ENCODE measurements at regions of chr5 and their contacts with region 1.

Region 1: GRCh38 chr5:181207214-181208107 is 2.5 kb upstream of the TRIM7 start:
- DNase-seq: peak; percentile 86
- ATAC-seq: peak; percentile 48
- H3K4me3 ChIP-seq: peak overlapping the region; percentile 30 to 50
- H3K27ac ChIP-seq: peak overlapping the region; percentile 93
- H3K4me1 ChIP-seq: peaks cover 27 to 60% of the 10 kb centered on the region in 2 experiments
- H3K27me3 ChIP-seq: no peaks in the 10 kb centered on the region
- CTCF ChIP-seq: no peak
- POLR2A ChIP-seq: no peak
- RAD21 ChIP-seq: no peak

Region 2: DNA sequence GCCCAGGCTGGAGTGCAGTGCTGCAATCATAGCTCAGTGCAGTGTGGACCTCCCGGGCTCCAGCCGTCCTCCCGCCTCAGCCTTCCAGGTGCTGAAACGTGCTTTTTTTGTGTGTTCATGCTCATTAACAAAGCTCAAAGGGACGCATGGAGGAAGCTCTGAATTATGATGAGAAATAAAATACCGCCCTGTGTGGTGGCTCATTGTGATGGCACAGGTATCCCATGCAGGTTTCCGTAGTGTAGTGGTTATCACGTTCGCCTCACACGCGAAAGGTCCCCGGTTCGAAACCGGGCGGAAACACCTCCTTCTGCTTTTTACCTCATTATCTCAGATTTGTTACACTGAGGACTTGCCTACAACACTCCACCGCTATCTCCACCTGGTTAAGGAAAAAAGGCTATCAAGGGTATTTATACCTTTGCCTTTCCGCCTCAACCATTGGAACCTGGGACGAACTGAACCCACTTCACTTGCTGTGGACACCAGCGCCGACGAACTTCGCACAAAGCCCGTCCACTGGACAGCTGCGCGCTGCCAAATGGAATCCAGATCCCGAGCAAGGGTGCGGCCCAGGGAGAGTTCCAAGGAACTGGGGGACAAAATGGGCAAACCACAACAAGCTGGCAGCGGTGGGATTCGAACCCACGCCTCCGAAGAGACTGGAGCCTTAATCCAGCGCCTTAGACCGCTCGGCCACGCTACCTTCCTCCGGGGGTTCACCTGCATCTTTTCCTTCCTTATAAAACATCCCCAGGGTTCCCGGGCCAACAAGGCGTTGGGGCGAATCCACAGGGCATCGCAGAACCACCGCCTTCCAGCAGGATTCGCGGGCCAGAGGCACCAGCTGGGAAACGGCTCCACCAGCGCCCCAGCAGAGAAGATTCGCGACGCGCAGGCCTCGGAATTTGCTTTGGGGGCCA is 33.8 kb before region 1 on chr5:
- CTCF ChIA-PET with region 1: interaction called, 9 read pairs
- POLR2A ChIA-PET with region 1: interaction called, 6 read pairs
- RAD21 ChIA-PET with region 1: interaction called in 1 of 2 experiments, 4 read pairs
- intact Hi-C with region 1: loop called (anchors 1 kb)
- DNase-seq: peak; percentile 86
- ATAC-seq: peak; percentile 72
- H3K4me3 ChIP-seq: peak overlapping the region; percentile 39 to 58
- H3K27ac ChIP-seq: peak overlapping the region; percentile 71
- H3K4me1 ChIP-seq: peaks cover 13 to 53% of the 10 kb centered on the region in 2 experiments; a peak in 3 of 4 replicates
- H3K27me3 ChIP-seq: no peaks in the 10 kb centered on the region
- CTCF ChIP-seq: peak in 1 of 3 experiments; percentile 3; a peak in 1 of 6 replicates
- POLR2A ChIP-seq: peak; percentile 15
- RAD21 ChIP-seq: no peak

Region 3: DNA sequence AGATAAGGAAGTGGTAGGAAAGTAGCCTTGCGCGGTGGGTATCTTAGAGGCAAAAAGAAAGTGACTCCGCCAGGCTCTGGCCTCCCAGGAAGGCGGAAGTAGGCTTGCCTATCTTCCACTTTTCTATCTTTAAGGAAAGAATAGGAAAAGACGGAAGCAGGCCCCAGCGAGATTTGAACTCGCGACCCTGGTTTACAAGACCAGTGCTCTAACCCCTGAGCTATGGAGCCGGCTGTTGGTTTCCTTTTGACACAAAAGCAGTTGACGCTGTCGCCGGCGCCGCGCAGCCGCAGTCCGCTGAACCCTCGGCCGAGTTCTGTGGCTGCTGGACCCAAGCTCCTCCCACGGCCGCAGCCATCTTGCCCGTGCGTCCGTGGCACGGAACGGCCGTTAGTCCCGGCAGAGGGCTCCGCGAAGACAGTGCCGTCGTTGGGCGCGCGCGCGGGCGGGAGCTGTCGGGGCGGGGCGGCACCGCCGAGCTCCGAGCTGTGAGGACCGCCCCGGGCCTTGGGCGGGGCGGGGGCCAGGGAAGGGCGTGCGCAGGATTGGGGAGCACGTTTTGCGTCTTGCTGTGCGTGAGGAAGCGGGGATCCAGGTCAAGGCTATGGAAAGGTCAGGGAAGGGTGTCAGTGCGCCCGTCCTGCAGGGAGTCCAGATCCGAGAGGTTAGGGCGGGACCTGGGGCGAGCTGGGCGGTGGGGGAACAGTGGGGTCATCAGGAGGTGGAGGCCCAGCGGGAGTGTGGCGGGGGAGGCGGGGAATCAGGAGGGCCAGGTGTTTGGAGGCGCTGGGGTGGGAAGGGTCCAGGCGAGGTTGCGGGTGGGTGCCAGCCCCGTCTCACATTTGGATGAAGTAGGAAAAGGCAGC is 15.7 kb before region 1 on chr5:
- CTCF ChIA-PET with region 1: interaction called, 4 read pairs
- POLR2A ChIA-PET with region 1: interaction called, 41 read pairs
- RAD21 ChIA-PET with region 1: interaction called, 6 to 7 read pairs
- intact Hi-C with region 1: loop called (anchors 1 kb)
- DNase-seq: peak; percentile 89
- ATAC-seq: peak; percentile 68
- H3K4me3 ChIP-seq: peak overlapping the region; percentile 74 to 92
- H3K27ac ChIP-seq: peak overlapping the region; percentile 76
- H3K4me1 ChIP-seq: peaks cover 18 to 48% of the 10 kb centered on the region in 2 experiments
- H3K27me3 ChIP-seq: no peaks in the 10 kb centered on the region
- CTCF ChIP-seq: no peak
- POLR2A ChIP-seq: no peak
- RAD21 ChIP-seq: no peak

Region 4: GRCh38 chr5:181217803-181218062 is 10.3 kb after region 1 on chr5:
- CTCF ChIA-PET with region 1: no interaction called
- POLR2A ChIA-PET with region 1: interaction called, 22 read pairs
- RAD21 ChIA-PET with region 1: no interaction called
- intact Hi-C with region 1: loop called (anchors 1 kb)
- DNase-seq: no peak
- ATAC-seq: no peak
- H3K4me3 ChIP-seq: no peak overlapping the region
- H3K27ac ChIP-seq: peak overlapping the region; percentile 19; the same call in 1 of the 2 replicates
- H3K4me1 ChIP-seq: peaks cover 12 to 48% of the 10 kb centered on the region in 2 experiments
- H3K27me3 ChIP-seq: no peaks in the 10 kb centered on the region
- CTCF ChIP-seq: no peak
- POLR2A ChIP-seq: no peak
- RAD21 ChIP-seq: no peak

Region 5: DNA sequence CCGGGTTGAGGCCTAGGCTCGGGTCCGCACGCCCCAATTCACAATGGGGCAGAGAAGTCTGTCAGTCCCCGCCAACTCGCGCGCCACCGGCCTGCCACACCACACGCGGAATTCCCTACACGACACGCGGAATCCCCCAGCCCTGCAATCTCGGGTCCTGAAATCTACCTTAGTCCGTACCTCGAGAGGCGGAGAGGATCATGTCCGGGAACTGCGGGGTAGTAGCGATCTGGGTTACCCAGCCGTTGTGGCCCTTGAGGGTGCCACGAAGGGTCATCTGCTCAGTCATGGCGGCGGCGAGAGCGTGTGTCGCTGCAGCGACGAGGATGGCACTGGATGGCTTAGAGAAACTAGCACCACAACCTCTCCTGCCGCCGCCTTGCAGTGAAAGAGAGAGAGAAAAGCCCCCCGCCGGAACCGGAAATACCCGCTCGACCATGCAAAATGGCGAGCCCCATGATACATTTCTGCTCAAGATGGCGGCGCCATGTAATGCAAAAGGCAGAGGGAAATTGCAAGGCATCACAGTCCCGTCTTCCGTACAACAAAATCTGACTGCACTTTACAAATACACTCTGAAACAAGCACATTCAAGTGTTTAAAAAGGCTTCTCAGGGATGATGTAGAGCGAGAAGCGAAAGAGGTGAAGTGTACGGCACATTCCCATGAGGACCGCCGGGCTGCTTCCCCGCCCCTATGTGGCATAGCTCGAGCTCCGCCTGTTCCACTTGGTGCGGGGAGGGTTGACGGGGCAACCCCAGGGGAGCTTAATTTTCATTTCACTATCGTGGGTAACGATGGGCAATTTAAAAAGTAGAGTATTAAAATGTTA is 36.3 kb after region 1 on chr5 and contains the start of gene RACK1:
- CTCF ChIA-PET with region 1: no interaction called
- POLR2A ChIA-PET with region 1: interaction called, 15 read pairs
- RAD21 ChIA-PET with region 1: no interaction called
- intact Hi-C with region 1: no loop called
- DNase-seq: peak; percentile 81
- ATAC-seq: peak; percentile 66
- H3K4me3 ChIP-seq: peak within 1 kb of the TSS; percentile 88 to 92
- H3K27ac ChIP-seq: peak within 1 kb of the TSS; percentile 96
- H3K4me1 ChIP-seq: peaks cover 24 to 46% of the 10 kb centered on the region in 2 experiments
- H3K27me3 ChIP-seq: no peaks in the 10 kb centered on the region
- CTCF ChIP-seq: no peak
- POLR2A ChIP-seq: peak; percentile 77
- RAD21 ChIP-seq: no peak
- total RNA-seq, gene RACK1: 2,432 TPM

Measured in HCT116 (cell line).